GM12878 (cell line): ENCODE measurements at regions of chr3 and their contacts with region 1.

Region 1: DNA sequence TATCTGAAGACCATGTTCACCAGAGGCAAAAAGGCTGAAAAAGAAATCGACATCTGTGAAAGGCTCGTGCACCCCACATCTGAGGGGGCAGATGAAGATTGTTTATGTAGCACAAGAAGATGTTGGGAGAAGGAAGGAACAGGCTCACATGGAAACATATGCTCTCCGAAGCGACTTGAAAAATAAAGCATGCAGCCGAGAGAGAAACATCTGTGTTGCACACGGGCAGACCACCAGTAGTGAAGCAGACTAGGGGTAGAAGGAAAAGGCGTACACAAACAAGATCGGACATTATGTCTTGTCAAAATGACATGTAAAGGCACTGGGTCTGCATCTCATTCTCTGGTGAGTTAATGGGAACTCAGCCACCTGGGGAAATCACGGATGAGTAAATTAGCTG is 356.5 kb downstream of the ZIC4 start:
- DNase-seq: no peak
- ATAC-seq: no peak
- H3K4me3 ChIP-seq: no peak overlapping the region
- H3K27ac ChIP-seq: no peak overlapping the region
- H3K4me1 ChIP-seq: no peaks in the 10 kb centered on the region
- H3K27me3 ChIP-seq: no peaks in the 10 kb centered on the region
- CTCF ChIP-seq: no peak
- EP300 ChIP-seq: no peak
- POLR2A ChIP-seq: no peak
- RAD21 ChIP-seq: no peak

Region 2: GRCh38 chr3:146033950-146034349 is 1015.9 kb before region 1 on chr3:
- CTCF ChIA-PET with region 1: no interaction called
- POLR2A ChIA-PET with region 1: no interaction called
- RAD21 ChIA-PET with region 1: no interaction called
- SMC1A ChIA-PET with region 1: no interaction called
- in situ Hi-C with region 1: no loop called
- intact Hi-C with region 1: loop called (anchors 5 kb)
- DNase-seq: no peak
- ATAC-seq: peak; percentile 65
- H3K4me3 ChIP-seq: no peak overlapping the region
- H3K27ac ChIP-seq: no peak overlapping the region
- H3K4me1 ChIP-seq: no peaks in the 10 kb centered on the region
- H3K27me3 ChIP-seq: no peaks in the 10 kb centered on the region
- CTCF ChIP-seq: no peak
- EP300 ChIP-seq: no peak
- POLR2A ChIP-seq: no peak
- RAD21 ChIP-seq: no peak

Region 3: DNA sequence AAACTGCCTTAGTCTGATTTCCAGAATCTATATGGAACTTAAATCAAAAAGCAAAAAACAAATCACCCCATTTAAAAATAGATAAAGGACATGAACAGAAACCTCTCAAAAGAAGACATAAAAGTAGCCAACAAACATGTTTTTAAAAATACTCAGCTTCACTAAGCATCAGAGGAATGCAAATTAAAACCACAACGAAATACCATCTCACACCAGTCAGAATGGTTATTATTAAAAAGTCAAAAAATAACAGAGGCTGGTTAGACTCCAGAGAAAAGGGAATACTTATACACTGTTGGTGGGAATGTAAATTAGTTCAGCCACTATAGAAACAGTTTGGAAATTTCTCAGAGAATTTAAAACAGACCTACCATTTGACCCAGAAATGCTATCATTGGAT is 11.3 kb before region 1 on chr3:
- CTCF ChIA-PET with region 1: no interaction called
- POLR2A ChIA-PET with region 1: no interaction called
- RAD21 ChIA-PET with region 1: no interaction called
- SMC1A ChIA-PET with region 1: no interaction called
- in situ Hi-C with region 1: no loop called
- intact Hi-C with region 1: no loop called
- DNase-seq: no peak
- ATAC-seq: no peak
- H3K4me3 ChIP-seq: no peak overlapping the region
- H3K27ac ChIP-seq: no peak overlapping the region
- H3K4me1 ChIP-seq: no peaks in the 10 kb centered on the region
- H3K27me3 ChIP-seq: no peaks in the 10 kb centered on the region
- CTCF ChIP-seq: no peak
- EP300 ChIP-seq: no peak
- POLR2A ChIP-seq: no peak
- RAD21 ChIP-seq: no peak